ENCODE measurements at regions of chr17 and their contacts with region 1.

Region 1: GRCh38 chr17:42337442-42337841 is 49.1 kb downstream of the STAT5A start:
- DNase-seq: peak; percentile 23 to 87 (median 80)
- ATAC-seq: peak; percentile 92
- H3K4me3 ChIP-seq: no peak overlapping the region
- H3K4me3 Mint-ChIP-seq: peak overlapping the region; percentile 52 to 84 (median 72)
- H3K27ac ChIP-seq: peak overlapping the region; percentile 77
- H3K27ac Mint-ChIP-seq: peak overlapping the region; percentile 85 to 98 (median 93)
- H3K4me1 ChIP-seq: peaks cover 11 to 29% of the 10 kb centered on the region in 2 donors
- H3K4me1 Mint-ChIP-seq: peaks cover 18 to 73% (median 38%) of the 10 kb centered on the region in 7 donors
- H3K27me3 ChIP-seq: no peaks in the 10 kb centered on the region
- H3K27me3 Mint-ChIP-seq: no peaks in the 10 kb centered on the region

Region 2: GRCh38 chr17:42266918-42267778 is 70.3 kb before region 1 on chr17:
- CTCF ChIA-PET with region 1: no interaction called
- POLR2A ChIA-PET with region 1: interaction called, 4 read pairs
- intact Hi-C with region 1: loop called in 1 of 2 experiments (anchors 5 kb)
- DNase-seq: peak in 5 of 9 donors; percentile 37 to 87 (median 43)
- ATAC-seq: peak; percentile 93
- H3K4me3 ChIP-seq: no peak overlapping the region
- H3K4me3 Mint-ChIP-seq: peak overlapping the region in 6 of 10 donors; percentile 3 to 48 (median 27)
- H3K27ac ChIP-seq: peak overlapping the region; percentile 58
- H3K27ac Mint-ChIP-seq: peak overlapping the region in 8 of 9 donors; percentile 58 to 99 (median 82)
- H3K4me1 ChIP-seq: peaks cover 45 to 47% of the 10 kb centered on the region in 2 donors
- H3K4me1 Mint-ChIP-seq: peaks cover 40 to 71% (median 63%) of the 10 kb centered on the region in 7 donors
- H3K27me3 ChIP-seq: no peaks in the 10 kb centered on the region
- H3K27me3 Mint-ChIP-seq: no peaks in the 10 kb centered on the region

Measured in naive thymus-derived CD4-positive, alpha-beta T cell (primary cell).